A673 (cell line): ENCODE measurements at regions of chr9 and their contacts with region 1.

Region 1: GRCh38 chr9:125189361-125190289 is at the start of gene PPP6C:
- DNase-seq: peak; percentile 99
- H3K4me3 ChIP-seq: peak within 1 kb of the TSS; percentile 99
- H3K27ac ChIP-seq: peak within 1 kb of the TSS; percentile 97
- H3K4me1 ChIP-seq: peaks cover 14% of the 10 kb centered on the region
- H3K27me3 ChIP-seq: no peaks in the 10 kb centered on the region
- CTCF ChIP-seq: peak; percentile 82
- total RNA-seq, gene PPP6C: 50.8 and 51.7 TPM in 2 replicates

Region 2: DNA sequence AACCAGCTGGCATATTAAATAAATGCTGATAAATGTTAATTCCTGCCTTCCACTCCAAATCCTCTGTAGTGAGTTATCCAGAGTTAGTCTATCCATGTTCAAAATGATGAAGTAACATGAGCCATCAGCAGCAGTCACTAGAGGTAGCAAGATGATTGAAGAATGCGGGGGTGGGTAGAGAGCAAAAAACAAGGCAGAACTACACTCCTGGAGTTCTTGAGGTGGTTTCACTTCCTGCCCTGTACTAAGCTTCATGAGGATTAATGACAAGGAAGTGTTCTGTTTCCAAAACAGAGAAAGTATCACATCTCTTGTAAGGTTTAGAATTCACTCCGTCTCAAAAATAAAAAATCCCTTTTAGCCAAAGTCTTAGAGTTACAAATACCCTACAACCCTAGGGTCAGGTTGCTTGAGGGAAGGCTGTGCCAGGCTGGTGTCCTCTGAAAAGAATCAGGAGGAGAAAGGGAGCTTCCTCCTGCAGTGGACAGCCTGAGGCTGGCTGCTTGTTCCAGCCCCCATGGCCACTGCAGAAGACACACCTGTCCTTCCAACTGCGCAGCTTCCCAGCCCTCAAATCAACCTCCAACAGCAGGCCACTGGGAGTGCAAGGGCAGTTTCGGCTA is 1439.9 kb before region 1 on chr9:
- CTCF ChIA-PET with region 1: no interaction called
- POLR2A ChIA-PET with region 1: no interaction called
- intact Hi-C with region 1: no loop called
- DNase-seq: no peak
- H3K4me3 ChIP-seq: no peak overlapping the region
- H3K27ac ChIP-seq: no peak overlapping the region
- H3K4me1 ChIP-seq: peaks cover 5% of the 10 kb centered on the region
- H3K27me3 ChIP-seq: no peaks in the 10 kb centered on the region
- CTCF ChIP-seq: no peak

Region 3: DNA sequence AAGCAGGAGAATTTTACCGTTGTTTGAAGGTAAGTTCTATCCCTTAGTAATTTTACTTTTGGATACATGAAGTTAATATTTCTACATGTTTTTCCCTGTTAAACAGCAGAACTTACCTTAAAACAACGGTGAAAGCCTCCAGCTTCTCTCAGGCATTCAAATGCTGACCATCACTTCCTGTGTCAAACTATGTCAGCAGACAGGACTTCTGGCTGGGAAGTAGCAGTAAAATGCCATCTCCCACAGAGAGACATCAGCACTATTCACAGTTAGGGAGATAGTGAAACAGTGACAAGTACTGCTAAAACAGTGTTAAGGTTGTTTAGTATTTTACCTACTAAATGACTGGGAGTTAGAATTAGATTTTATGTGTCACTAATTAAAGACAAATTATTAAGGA is 214.5 kb before region 1 on chr9:
- CTCF ChIA-PET with region 1: no interaction called
- POLR2A ChIA-PET with region 1: no interaction called
- intact Hi-C with region 1: no loop called
- DNase-seq: no peak
- H3K4me3 ChIP-seq: no peak overlapping the region
- H3K27ac ChIP-seq: no peak overlapping the region
- H3K4me1 ChIP-seq: no peaks in the 10 kb centered on the region
- H3K27me3 ChIP-seq: no peaks in the 10 kb centered on the region
- CTCF ChIP-seq: no peak

Region 4: GRCh38 chr9:125143375-125144090 is 46.1 kb before region 1 on chr9 and contains the start of gene SCAI:
- CTCF ChIA-PET with region 1: no interaction called
- POLR2A ChIA-PET with region 1: no interaction called
- intact Hi-C with region 1: loop called (anchors 2 kb)
- DNase-seq: peak; percentile 100
- H3K4me3 ChIP-seq: peak within 1 kb of the TSS; percentile 64
- H3K27ac ChIP-seq: peak within 1 kb of the TSS; percentile 48
- H3K4me1 ChIP-seq: no peaks in the 10 kb centered on the region
- H3K27me3 ChIP-seq: no peaks in the 10 kb centered on the region
- CTCF ChIP-seq: peak; percentile 99
- total RNA-seq, gene SCAI: 14.1 and 15.1 TPM in 2 replicates

Region 5: DNA sequence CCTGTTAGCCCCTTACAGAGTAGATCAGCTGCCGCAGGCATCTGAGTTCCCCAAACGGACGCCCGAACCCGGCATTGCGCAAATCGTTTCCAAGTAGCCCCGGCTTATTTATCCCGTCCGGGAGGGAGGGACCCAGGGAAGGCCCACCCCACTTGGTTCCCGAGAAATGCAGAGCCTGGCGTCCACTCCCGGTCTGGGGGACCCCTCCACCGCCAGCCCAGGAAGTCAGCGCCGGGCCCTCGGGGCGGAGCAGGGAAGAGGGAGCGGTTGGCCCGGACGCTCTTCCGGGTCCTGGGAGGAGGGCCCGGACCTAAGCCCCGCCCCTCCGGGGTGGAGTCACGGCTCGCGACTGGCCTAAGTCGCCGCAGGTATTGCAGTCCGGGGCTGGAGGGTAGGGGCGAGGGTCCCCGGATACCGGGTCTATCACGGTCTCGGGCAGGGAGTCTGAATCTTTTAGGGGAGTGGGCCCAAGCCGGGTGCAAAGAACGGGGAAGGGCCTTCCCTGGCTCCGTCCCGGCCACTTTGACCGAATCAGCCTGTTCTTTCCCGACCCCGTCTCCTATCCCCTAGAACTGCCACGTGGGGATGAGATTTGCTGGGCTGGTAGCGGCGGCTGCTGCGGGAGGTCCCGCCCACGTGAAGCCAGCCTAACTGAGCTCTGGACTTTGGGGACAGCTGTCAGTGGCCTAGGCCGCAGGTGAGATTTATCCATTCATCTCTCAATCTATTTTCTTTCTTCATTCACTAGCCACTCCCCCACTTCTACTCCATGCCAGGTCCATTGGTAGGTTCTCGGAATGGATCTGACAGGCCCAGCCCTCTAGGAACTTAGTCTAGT is 10.8 kb after region 1 on chr9 and contains the start of gene RABEPK:
- CTCF ChIA-PET with region 1: no interaction called
- POLR2A ChIA-PET with region 1: no interaction called
- intact Hi-C with region 1: loop called (anchors 1 kb)
- DNase-seq: peak; percentile 96
- H3K4me3 ChIP-seq: peak within 1 kb of the TSS; percentile 77
- H3K27ac ChIP-seq: peak within 1 kb of the TSS; percentile 80
- H3K4me1 ChIP-seq: peaks cover 4% of the 10 kb centered on the region
- H3K27me3 ChIP-seq: no peaks in the 10 kb centered on the region
- CTCF ChIP-seq: no peak
- total RNA-seq, gene RABEPK: 32.7 and 43.6 TPM in 2 replicates